IMR-90 (cell line): ENCODE measurements at regions of chr6 and their contacts with region 1.

Region 1: GRCh38 chr6:79078075-79079025 is at the start of gene PHIP:
- DNase-seq: peak; percentile 97
- ATAC-seq: peak; percentile 84
- H3K4me3 ChIP-seq: peak within 1 kb of the TSS; percentile 75
- H3K27ac ChIP-seq: peak within 1 kb of the TSS; percentile 95
- H3K4me1 ChIP-seq: no peaks in the 10 kb centered on the region
- H3K27me3 ChIP-seq: no peaks in the 10 kb centered on the region
- CTCF ChIP-seq: no peak
- POLR2A ChIP-seq: peak; percentile 37; the same call in 1 of the 2 replicates
- RAD21 ChIP-seq: 0 out of 2 replicates have a peak, but pooled peaks have one; percentile 3
- total RNA-seq, gene PHIP: 20.4 and 32.2 TPM in 2 replicates

Region 2: GRCh38 chr6:77466055-77466450 is 1612.3 kb before region 1 on chr6:
- CTCF ChIA-PET with region 1: no interaction called
- POLR2A ChIA-PET with region 1: no interaction called
- dilution Hi-C with region 1: no loop called
- in situ Hi-C with region 1: no loop called
- intact Hi-C with region 1: loop called (anchors 10 kb)
- DNase-seq: peak; percentile 74
- ATAC-seq: peak; percentile 81
- H3K4me3 ChIP-seq: peak overlapping the region; percentile 46
- H3K27ac ChIP-seq: no peak overlapping the region; the same call in 1 of the 2 replicates
- H3K4me1 ChIP-seq: no peaks in the 10 kb centered on the region; the same call in 1 of the 2 replicates
- H3K27me3 ChIP-seq: peaks cover 17% of the 10 kb centered on the region
- CTCF ChIP-seq: peak; percentile 72
- POLR2A ChIP-seq: no peak
- RAD21 ChIP-seq: peak; percentile 71

Region 3: GRCh38 chr6:78947962-78948361 is 130.4 kb before region 1 on chr6:
- CTCF ChIA-PET with region 1: no interaction called
- POLR2A ChIA-PET with region 1: no interaction called
- dilution Hi-C with region 1: no loop called
- in situ Hi-C with region 1: no loop called
- intact Hi-C with region 1: loop called (anchors 5 kb)
- DNase-seq: peak; percentile 72
- ATAC-seq: peak; percentile 81
- H3K4me3 ChIP-seq: peak overlapping the region; percentile 14; the same call in 1 of the 2 replicates
- H3K27ac ChIP-seq: no peak overlapping the region
- H3K4me1 ChIP-seq: no peaks in the 10 kb centered on the region
- H3K27me3 ChIP-seq: no peaks in the 10 kb centered on the region
- CTCF ChIP-seq: no peak
- POLR2A ChIP-seq: no peak
- RAD21 ChIP-seq: no peak

Region 4: GRCh38 chr6:79233611-79234149 is 155.3 kb after region 1 on chr6:
- CTCF ChIA-PET with region 1: interaction called, 3 read pairs
- POLR2A ChIA-PET with region 1: no interaction called
- dilution Hi-C with region 1: no loop called
- in situ Hi-C with region 1: loop called (anchors 10 kb)
- intact Hi-C with region 1: loop called (anchors 1 kb)
- DNase-seq: peak; percentile 82
- ATAC-seq: peak; percentile 85
- H3K4me3 ChIP-seq: peak overlapping the region; percentile 85
- H3K27ac ChIP-seq: peak overlapping the region; percentile 69
- H3K4me1 ChIP-seq: no peaks in the 10 kb centered on the region
- H3K27me3 ChIP-seq: no peaks in the 10 kb centered on the region
- CTCF ChIP-seq: peak; percentile 20; the same call in 1 of the 2 replicates
- POLR2A ChIP-seq: peak; percentile 41; the same call in 1 of the 2 replicates
- RAD21 ChIP-seq: no peak

Region 5: GRCh38 chr6:79536954-79537747 is 458.8 kb after region 1 on chr6 and contains the start of gene LCA5:
- CTCF ChIA-PET with region 1: no interaction called
- POLR2A ChIA-PET with region 1: no interaction called
- dilution Hi-C with region 1: no loop called
- in situ Hi-C with region 1: no loop called
- intact Hi-C with region 1: loop called (anchors 1 kb)
- DNase-seq: peak; percentile 97
- ATAC-seq: peak; percentile 98
- H3K4me3 ChIP-seq: peak within 1 kb of the TSS; percentile 91
- H3K27ac ChIP-seq: peak within 1 kb of the TSS; percentile 90
- H3K4me1 ChIP-seq: no peaks in the 10 kb centered on the region
- H3K27me3 ChIP-seq: no peaks in the 10 kb centered on the region
- CTCF ChIP-seq: no peak
- POLR2A ChIP-seq: 0 out of 2 replicates have a peak, but pooled peaks have one; percentile 59
- RAD21 ChIP-seq: no peak
- total RNA-seq, gene LCA5: 2.0 and 3.3 TPM in 2 replicates

Region 6: GRCh38 chr6:79713701-79714322 is 635.5 kb after region 1 on chr6:
- CTCF ChIA-PET with region 1: no interaction called
- POLR2A ChIA-PET with region 1: no interaction called
- dilution Hi-C with region 1: no loop called
- in situ Hi-C with region 1: no loop called
- intact Hi-C with region 1: loop called (anchors 1 kb)
- DNase-seq: peak; percentile 50
- ATAC-seq: peak; percentile 81
- H3K4me3 ChIP-seq: no peak overlapping the region
- H3K27ac ChIP-seq: no peak overlapping the region
- H3K4me1 ChIP-seq: no peaks in the 10 kb centered on the region
- H3K27me3 ChIP-seq: no peaks in the 10 kb centered on the region; the same call in 1 of the 2 replicates
- CTCF ChIP-seq: peak; percentile 65
- POLR2A ChIP-seq: no peak
- RAD21 ChIP-seq: peak; percentile 74